GM23248 (cell line): ENCODE measurements at regions of chr1 and their contacts with region 1.

Region 1: GRCh38 chr1:53393325-53393792 is 65.5 kb upstream of the LRP8 start:
- DNase-seq: peak; percentile 74
- H3K4me3 ChIP-seq: no peak overlapping the region
- H3K27ac ChIP-seq: no peak overlapping the region
- H3K4me1 ChIP-seq: no peaks in the 10 kb centered on the region
- H3K27me3 ChIP-seq: peaks cover 15% of the 10 kb centered on the region; the same call in 1 of the 2 replicates

Region 2: DNA sequence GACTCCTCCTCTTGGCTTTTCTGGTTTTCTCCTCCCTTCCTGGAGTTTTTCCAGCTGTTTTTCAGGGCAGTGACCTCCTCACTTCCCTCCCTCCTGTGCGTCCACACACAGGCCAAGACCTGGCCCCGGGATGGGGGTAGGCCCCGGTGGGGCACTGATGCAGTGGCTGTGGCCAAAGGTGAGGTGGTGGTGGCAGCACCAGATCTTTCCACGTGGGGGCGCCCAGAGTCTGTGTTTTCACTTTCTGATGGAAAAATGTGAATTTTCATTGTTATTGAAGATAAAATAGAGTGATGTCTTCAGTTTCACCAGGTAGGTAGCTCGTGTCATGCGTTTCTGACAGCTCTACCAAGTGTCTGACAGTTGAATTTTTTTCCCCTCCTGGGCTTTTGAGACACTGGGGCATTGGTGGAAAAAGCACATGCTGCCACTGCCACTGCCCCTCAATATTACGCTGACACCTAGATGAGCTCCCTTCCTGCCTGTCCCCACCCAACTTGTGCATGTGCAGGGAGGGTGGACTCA is 115.1 kb before region 1 on chr1:
- in situ Hi-C with region 1: loop called (anchors 5 kb)
- DNase-seq: peak; percentile 59
- H3K4me3 ChIP-seq: no peak overlapping the region
- H3K27ac ChIP-seq: no peak overlapping the region
- H3K4me1 ChIP-seq: no peaks in the 10 kb centered on the region
- H3K27me3 ChIP-seq: no peaks in the 10 kb centered on the region